ENCODE measurements at regions of chr5 and their contacts with region 1.

Region 1: DNA sequence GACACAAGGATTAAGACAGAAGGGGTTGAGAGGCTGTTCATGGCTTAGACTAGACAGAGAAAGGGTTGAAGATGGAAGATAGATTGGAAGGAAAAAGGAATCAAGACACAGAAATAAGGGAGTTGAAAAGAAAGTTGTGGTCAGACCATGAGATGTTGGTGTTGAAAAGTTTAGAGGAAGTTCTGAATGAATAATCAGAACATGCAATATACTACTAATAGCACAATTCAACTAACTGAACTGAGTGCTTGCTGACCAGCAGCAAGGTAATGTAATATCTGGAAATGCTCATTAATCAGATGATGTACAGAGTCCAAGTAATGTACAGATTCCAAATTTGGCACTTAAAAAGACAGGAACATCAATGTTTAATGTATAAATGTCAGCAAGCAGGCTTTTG is 10.6 kb upstream of the NNT start:
- DNase-seq: no peak
- ATAC-seq: no peak
- H3K4me3 ChIP-seq: no peak overlapping the region
- H3K27ac ChIP-seq: no peak overlapping the region
- H3K4me1 ChIP-seq: no peaks in the 10 kb centered on the region
- H3K27me3 ChIP-seq: no peaks in the 10 kb centered on the region
- CTCF ChIP-seq: no peak
- POLR2A ChIP-seq: no peak
- RAD21 ChIP-seq: no peak

Region 2: DNA sequence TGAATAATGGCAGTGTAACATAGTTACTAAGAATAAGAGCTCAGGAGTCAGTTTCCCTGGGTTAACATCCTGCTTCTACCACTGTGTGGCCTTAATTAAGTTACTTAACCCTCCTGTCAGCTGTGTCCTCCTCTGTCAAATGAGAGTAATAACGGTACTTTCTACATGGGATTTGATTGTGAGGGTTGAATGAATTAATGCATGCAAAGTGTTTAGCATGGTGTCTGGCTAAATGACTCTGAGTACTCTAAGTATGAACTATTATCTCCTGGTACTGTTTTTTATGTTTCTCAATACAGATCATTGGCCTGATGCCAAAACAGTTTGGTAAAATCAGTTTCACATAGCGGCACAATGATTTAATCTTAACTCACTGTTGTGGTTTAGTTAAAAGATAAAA is 452.1 kb before region 1 on chr5:
- CTCF ChIA-PET with region 1: no interaction called
- POLR2A ChIA-PET with region 1: no interaction called
- dilution Hi-C with region 1: no loop called
- in situ Hi-C with region 1: no loop called
- intact Hi-C with region 1: no loop called
- DNase-seq: peak; percentile 44
- ATAC-seq: no peak
- H3K4me3 ChIP-seq: no peak overlapping the region
- H3K27ac ChIP-seq: no peak overlapping the region
- H3K4me1 ChIP-seq: no peaks in the 10 kb centered on the region
- H3K27me3 ChIP-seq: no peaks in the 10 kb centered on the region
- CTCF ChIP-seq: no peak
- POLR2A ChIP-seq: no peak
- RAD21 ChIP-seq: no peak

Region 3: DNA sequence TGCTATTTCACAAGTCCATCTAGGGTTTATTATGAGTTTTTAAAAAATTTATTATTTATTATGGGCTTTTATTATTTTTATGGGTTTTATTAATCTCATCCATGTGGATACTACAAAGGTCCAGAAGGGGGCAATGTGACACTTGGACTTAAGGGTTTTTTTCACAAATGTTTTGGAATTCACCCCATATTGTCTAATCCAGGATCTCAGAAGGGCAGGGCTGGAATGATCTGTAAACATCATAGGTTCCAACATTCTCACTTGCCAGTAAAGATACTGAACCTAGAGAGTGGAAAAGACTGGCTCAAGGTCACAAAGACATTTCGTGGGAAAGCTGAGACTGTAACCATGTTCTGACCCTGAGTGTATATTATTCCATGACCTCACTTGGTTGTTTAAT is 364.7 kb before region 1 on chr5:
- CTCF ChIA-PET with region 1: no interaction called
- POLR2A ChIA-PET with region 1: interaction called, 13 read pairs
- dilution Hi-C with region 1: no loop called
- in situ Hi-C with region 1: no loop called
- intact Hi-C with region 1: no loop called
- DNase-seq: peak; percentile 64
- ATAC-seq: peak; percentile 83
- H3K4me3 ChIP-seq: no peak overlapping the region
- H3K27ac ChIP-seq: no peak overlapping the region
- H3K4me1 ChIP-seq: no peaks in the 10 kb centered on the region
- H3K27me3 ChIP-seq: peaks cover 4% of the 10 kb centered on the region; the same call in 1 of the 2 replicates
- CTCF ChIP-seq: peak; percentile 67
- POLR2A ChIP-seq: no peak
- RAD21 ChIP-seq: peak; percentile 58

Measured in IMR-90 (cell line).